Common myeloid progenitor, CD34-positive (primary cell): ENCODE measurements at regions of chr4 and their contacts with region 1.

Region 1: DNA sequence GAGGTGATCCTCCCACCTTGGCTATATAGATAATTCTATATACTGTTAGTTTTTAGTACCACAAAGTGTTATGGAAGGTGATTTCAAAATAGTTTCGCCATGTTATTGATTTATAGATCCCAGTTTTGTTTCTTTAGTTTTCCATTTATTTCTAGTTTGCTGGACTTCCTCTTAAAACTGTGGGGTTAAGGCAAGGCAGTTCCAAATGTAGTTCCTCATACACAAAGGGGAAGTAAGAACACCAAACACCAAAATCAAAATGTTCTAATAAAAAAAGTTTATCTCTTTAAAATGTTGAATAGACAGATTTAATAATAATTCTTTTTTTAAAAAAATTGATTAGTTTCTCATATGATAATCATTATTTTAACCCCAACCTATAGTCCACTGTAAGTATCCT is 6.8 kb upstream of the CISD2 start:
- DNase-seq: peak; percentile 40 to 80 (median 52)
- H3K4me3 ChIP-seq: peak overlapping the region in 1 of 7 experiments; percentile 20
- H3K27ac ChIP-seq: no peak overlapping the region
- H3K4me1 ChIP-seq: peaks cover 5 to 36% (median 20%) of the 10 kb centered on the region in 4 experiments
- H3K27me3 ChIP-seq: no peaks in the 10 kb centered on the region

Region 2: GRCh38 chr4:102815981-102816380 is 46.0 kb before region 1 on chr4:
- CTCF ChIA-PET with region 1: no interaction called
- POLR2A ChIA-PET with region 1: no interaction called
- DNase-seq: no peak
- H3K4me3 ChIP-seq: no peak overlapping the region
- H3K27ac ChIP-seq: no peak overlapping the region
- H3K4me1 ChIP-seq: peaks cover 8 to 33% (median 12%) of the 10 kb centered on the region in 4 experiments
- H3K27me3 ChIP-seq: no peaks in the 10 kb centered on the region

Region 3: DNA sequence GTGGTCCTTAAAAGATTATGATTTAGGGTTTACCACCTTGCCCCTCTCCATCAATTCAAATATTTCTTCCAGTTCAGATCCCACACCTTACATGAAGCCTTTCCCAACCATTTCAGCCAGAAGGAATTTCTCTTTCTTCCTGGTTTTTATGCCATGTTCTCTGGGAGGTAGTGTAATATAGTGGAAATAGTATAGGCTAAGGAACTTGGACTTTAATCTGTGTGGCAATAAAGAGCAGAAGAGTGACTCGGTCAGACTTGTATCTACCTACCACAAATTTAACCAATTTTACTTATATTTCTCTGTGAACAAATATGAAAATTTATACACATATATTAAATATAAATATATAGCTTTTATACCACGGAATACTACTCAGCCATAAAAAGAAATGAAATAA is 11.6 kb before region 1 on chr4:
- CTCF ChIA-PET with region 1: interaction called, 12 read pairs
- POLR2A ChIA-PET with region 1: no interaction called
- DNase-seq: no peak
- H3K4me3 ChIP-seq: no peak overlapping the region
- H3K27ac ChIP-seq: no peak overlapping the region
- H3K4me1 ChIP-seq: no peaks in the 10 kb centered on the region
- H3K27me3 ChIP-seq: no peaks in the 10 kb centered on the region

Region 4: DNA sequence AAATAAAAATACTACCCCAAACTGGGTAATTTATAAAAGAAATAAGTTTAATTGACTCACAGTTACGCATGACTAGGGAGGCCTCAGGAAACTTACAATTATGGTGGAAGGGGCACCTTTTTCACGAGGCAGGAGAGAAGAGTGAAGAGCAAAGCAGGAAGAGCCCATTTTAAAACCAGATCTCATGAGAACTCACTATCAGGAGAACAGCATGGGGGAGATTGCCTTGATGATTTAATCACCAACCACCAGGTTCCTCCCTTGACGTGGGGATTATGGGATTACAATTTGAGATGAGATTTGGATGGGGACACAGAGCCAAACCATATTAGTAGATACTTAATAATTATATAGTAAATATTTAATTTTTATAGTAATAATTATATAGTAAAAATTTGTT is 16.9 kb after region 1 on chr4:
- CTCF ChIA-PET with region 1: no interaction called
- POLR2A ChIA-PET with region 1: no interaction called
- DNase-seq: no peak
- H3K4me3 ChIP-seq: no peak overlapping the region
- H3K27ac ChIP-seq: no peak overlapping the region
- H3K4me1 ChIP-seq: no peaks in the 10 kb centered on the region
- H3K27me3 ChIP-seq: no peaks in the 10 kb centered on the region